Heart left ventricle (tissue), 16 donors: ENCODE measurements at regions of chr1 and their contacts with region 1.

Region 1: GRCh38 chr1:67053785-67054772 is at the start of gene SLC35D1:
- DNase-seq: peak; percentile 75 to 85 (median 81)
- ATAC-seq: peak; percentile 76 to 94 (median 84)
- H3K4me3 ChIP-seq: peak within 1 kb of the TSS; percentile 70 to 95 (median 80)
- H3K27ac ChIP-seq: peak within 1 kb of the TSS; percentile 88 to 99 (median 96)
- H3K4me1 ChIP-seq: peaks cover 0 to 28% (median 22%) of the 10 kb centered on the region in 12 donors
- H3K27me3 ChIP-seq: no peaks in the 10 kb centered on the region
- CTCF ChIP-seq: no peak
- POLR2A ChIP-seq: peak in 1 of 2 donors; percentile 81
- total RNA-seq, gene SLC35D1: 2.9 to 6.8 (median 4.2) TPM

Region 2: GRCh38 chr1:66752000-66752592 is 302.0 kb before region 1 on chr1 and contains the start of gene DYNLT5:
- intact Hi-C with region 1: loop called in 1 of 10 experiments (anchors 10 kb)
- DNase-seq: peak; percentile 70 to 87 (median 72)
- ATAC-seq: peak; percentile 86 to 97 (median 96)
- H3K4me3 ChIP-seq: peak within 1 kb of the TSS in 11 of 12 donors; percentile 35 to 68 (median 59)
- H3K27ac ChIP-seq: peak within 1 kb of the TSS; percentile 29 to 83 (median 76)
- H3K4me1 ChIP-seq: peaks cover 0 to 21% (median 9%) of the 10 kb centered on the region in 12 donors
- H3K27me3 ChIP-seq: peaks cover 0 to 10% (median 0%) of the 10 kb centered on the region in 9 donors
- CTCF ChIP-seq: peak in 8 of 12 donors; percentile 10 to 50 (median 32)
- POLR2A ChIP-seq: peak in 1 of 2 donors; percentile 12
- total RNA-seq, gene DYNLT5: 0.48 to 7.3 (median 1.8) TPM

Region 3: GRCh38 chr1:66924756-66925557 is 129.1 kb before region 1 on chr1 and contains the starts of genes DNAI4 and MIER1:
- intact Hi-C with region 1: loop called in 4 of 10 experiments (anchors 5 kb)
- DNase-seq: peak; percentile 98 to 99 (median 99)
- ATAC-seq: peak; percentile 96 to 98 (median 98)
- H3K4me3 ChIP-seq: peak within 1 kb of the TSS; percentile 61 to 93 (median 76)
- H3K27ac ChIP-seq: peak within 1 kb of the TSS; percentile 82 to 96 (median 92)
- H3K4me1 ChIP-seq: peaks cover 3 to 40% (median 27%) of the 10 kb centered on the region in 12 donors
- H3K27me3 ChIP-seq: no peaks in the 10 kb centered on the region
- CTCF ChIP-seq: peak in 7 of 12 donors; percentile 9 to 50 (median 27)
- POLR2A ChIP-seq: peak in 1 of 2 donors; percentile 61
- total RNA-seq, gene DNAI4: 4.5 to 18.9 (median 10.5) TPM
- total RNA-seq, gene MIER1: 14.3 to 23.8 (median 19.3) TPM

Region 4: DNA sequence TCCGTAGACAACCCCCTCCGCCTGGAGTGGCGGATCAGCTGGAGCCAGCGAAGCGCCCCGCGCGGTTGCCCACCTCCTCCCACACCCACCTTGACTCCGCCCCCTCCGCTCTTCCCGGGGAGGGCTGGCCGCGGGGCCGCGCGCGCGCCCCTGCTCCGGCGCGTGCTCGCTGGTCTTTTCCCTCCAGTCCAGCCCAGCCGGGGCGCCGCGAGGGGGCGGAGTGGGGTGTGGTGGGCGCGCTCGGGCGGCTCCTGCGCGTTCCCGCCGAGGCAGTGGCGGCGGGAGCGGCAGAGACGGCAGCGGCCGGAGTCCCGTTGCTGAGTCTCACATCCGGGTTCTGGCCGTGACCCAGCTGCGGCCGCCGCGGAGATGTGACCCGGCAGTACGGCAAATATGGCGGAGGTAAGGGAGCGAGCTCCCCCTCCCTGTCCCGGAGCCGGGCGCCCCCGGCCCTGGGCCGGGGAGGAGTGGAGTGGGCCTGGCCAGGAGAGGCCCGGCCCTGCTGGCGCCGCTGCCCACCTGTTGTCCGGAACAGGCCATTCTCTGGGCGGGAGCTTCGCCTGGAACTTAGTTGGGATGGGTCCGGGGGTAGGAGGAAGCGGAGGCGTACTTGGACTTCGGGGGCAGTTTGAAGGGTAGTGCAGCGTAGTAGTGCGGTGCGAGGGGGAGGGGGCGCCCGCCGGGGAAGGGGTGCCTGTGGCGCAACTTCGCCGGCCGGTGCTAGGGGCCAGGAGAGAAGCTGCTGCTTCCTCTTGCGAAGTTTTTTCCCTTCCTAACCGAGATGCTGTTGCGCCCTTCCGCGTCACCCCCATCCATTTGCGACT is 123.9 kb before region 1 on chr1:
- intact Hi-C with region 1: loop called in 4 of 10 experiments (anchors 5 kb)
- DNase-seq: peak; percentile 96 to 98 (median 96)
- ATAC-seq: peak; percentile 74 to 91 (median 86)
- H3K4me3 ChIP-seq: peak overlapping the region; percentile 68 to 86 (median 76)
- H3K27ac ChIP-seq: peak overlapping the region; percentile 86 to 98 (median 93)
- H3K4me1 ChIP-seq: peaks cover 6 to 72% (median 54%) of the 10 kb centered on the region in 12 donors
- H3K27me3 ChIP-seq: no peaks in the 10 kb centered on the region
- CTCF ChIP-seq: peak; percentile 20 to 74 (median 48)
- POLR2A ChIP-seq: peak in 1 of 2 donors; percentile 73

Region 5: GRCh38 chr1:66938613-66939012 is 115.5 kb before region 1 on chr1:
- intact Hi-C with region 1: loop called in 2 of 10 experiments (anchors 5 kb)
- DNase-seq: no peak
- ATAC-seq: no peak
- H3K4me3 ChIP-seq: no peak overlapping the region
- H3K27ac ChIP-seq: no peak overlapping the region
- H3K4me1 ChIP-seq: peaks cover 0 to 77% (median 34%) of the 10 kb centered on the region in 12 donors
- H3K27me3 ChIP-seq: no peaks in the 10 kb centered on the region
- CTCF ChIP-seq: no peak
- POLR2A ChIP-seq: no peak

Region 6: DNA sequence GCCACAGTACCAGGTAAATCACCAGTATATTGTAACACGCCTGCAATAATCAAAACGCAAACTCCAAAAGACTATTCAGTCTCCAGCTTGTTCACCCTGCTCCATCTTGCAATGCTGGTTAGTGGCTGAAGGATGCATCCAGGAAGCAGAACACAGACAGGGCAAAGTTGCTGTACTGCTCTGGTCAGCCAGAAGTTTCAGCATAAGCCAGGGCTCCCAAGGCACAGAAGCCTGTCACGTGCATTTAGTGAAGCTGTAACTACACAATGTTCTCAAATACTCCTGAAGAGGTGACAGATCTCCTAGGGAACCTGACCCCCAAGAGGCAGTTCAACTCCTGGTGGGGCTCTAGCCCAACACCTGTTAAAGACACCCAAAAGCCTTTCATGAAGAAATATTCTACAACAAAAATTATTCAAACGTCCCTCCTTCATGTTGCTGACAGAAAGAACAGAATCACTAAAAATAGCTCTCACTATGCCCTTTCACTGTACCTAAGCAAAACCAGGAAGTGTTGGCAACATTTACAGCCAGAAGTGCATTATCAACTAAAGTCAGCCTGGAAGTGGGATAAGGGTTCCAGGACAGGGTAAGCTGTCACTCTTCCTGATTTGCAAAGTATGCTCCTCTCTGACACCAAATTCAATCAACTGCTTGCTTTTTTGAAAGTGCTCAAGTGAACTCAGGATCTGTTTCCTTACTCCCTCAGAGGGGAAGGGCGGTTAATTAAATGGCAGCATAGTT is 52.2 kb before region 1 on chr1:
- intact Hi-C with region 1: loop called in 3 of 10 experiments (anchors 5 kb)
- DNase-seq: peak in 1 of 5 donors; percentile 30
- ATAC-seq: peak; percentile 67 to 87 (median 80)
- H3K4me3 ChIP-seq: no peak overlapping the region
- H3K27ac ChIP-seq: peak overlapping the region in 9 of 12 donors; percentile 11 to 71 (median 54)
- H3K4me1 ChIP-seq: peaks cover 0 to 35% (median 7%) of the 10 kb centered on the region in 12 donors
- H3K27me3 ChIP-seq: no peaks in the 10 kb centered on the region
- CTCF ChIP-seq: no peak
- POLR2A ChIP-seq: no peak

Region 7: GRCh38 chr1:67013573-67013972 is 40.5 kb before region 1 on chr1:
- intact Hi-C with region 1: loop called in 1 of 10 experiments (anchors 5 kb)
- DNase-seq: no peak
- ATAC-seq: peak in 3 of 4 donors; percentile 61 to 80 (median 67)
- H3K4me3 ChIP-seq: no peak overlapping the region
- H3K27ac ChIP-seq: no peak overlapping the region
- H3K4me1 ChIP-seq: peaks cover 0 to 5% (median 0%) of the 10 kb centered on the region in 12 donors
- H3K27me3 ChIP-seq: no peaks in the 10 kb centered on the region
- CTCF ChIP-seq: no peak
- POLR2A ChIP-seq: no peak